ENCODE measurements at regions of chr9 and their contacts with region 1.

Region 1: GRCh38 chr9:131334629-131335367 is 45.3 kb downstream of the PLPP7 start:
- DNase-seq: no peak
- H3K4me3 ChIP-seq: no peak overlapping the region
- H3K27ac ChIP-seq: no peak overlapping the region
- H3K4me1 ChIP-seq: no peaks in the 10 kb centered on the region
- H3K27me3 ChIP-seq: no peaks in the 10 kb centered on the region
- CTCF ChIP-seq: no peak
- POLR2A ChIP-seq: no peak

Region 2: GRCh38 chr9:131178382-131178781 is 156.4 kb before region 1 on chr9:
- intact Hi-C with region 1: loop called (anchors 5 kb)
- DNase-seq: peak; percentile 33 to 37
- H3K4me3 ChIP-seq: no peak overlapping the region
- H3K27ac ChIP-seq: no peak overlapping the region
- H3K4me1 ChIP-seq: no peaks in the 10 kb centered on the region
- H3K27me3 ChIP-seq: no peaks in the 10 kb centered on the region
- CTCF ChIP-seq: peak; percentile 37 to 78 (median 65)
- POLR2A ChIP-seq: no peak

Measured in thyroid gland (tissue), 4 donors.